Dendritic cell treated with granulocyte-macrophage colony-stimulating factor and Interleukin-4, amounts not matched to agents 40 ng/mL and 50 ng/mL, for 4 days (primary cell): ENCODE measurements at regions of chr5 and their contacts with region 1.

Region 1: GRCh38 chr5:89117124-89117644 is 234.2 kb upstream of the MEF2C start:
- H3K4me3 Mint-ChIP-seq: no peak overlapping the region
- H3K27ac Mint-ChIP-seq: no peak overlapping the region
- H3K4me1 Mint-ChIP-seq: no peaks in the 10 kb centered on the region
- H3K27me3 Mint-ChIP-seq: no peaks in the 10 kb centered on the region

Region 2: DNA sequence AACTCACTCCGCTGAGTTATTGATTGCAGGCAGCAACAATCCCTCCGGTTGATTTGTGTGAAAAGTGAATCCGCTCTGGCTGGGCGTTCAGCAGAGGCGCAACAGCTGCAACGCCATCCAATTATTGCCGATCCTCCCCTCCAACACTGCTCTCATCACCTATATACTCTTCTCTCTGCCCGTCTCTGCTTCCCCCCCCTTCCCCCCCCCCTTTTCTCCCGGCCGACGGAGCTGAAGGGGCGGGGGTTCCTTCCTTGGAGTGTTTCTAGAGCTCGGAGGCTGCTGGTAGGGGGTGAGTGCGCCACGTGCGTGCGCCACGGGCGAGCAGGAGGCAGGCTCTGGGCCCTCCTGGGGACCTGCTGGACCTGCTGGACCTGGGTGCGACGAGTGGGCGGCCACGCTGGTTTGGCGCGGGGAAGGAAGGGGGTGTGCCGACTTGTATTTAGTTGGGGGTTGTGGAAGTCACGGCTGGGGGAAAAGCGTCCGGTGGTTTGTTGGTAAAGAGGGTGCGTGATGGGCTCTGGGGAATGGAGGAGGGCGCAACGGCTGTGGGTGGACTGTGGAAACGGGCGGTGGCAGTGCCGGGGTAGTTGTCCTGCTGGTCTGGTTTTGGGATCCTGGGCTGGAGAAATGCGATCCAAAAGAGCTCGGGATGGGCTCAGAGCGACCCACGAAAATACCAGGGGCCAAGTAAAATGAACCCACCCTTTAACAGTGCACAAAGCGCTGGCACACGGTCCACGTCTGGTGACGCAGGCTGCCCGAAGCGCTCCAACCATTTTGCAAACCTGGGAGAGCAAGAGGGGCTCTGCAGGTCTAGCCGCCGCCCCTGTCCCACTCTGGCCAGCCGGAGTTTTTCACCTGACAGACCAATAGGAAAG is 227.8 kb before region 1 on chr5:
- intact Hi-C with region 1: loop called (anchors 5 kb)
- H3K4me3 Mint-ChIP-seq: peak overlapping the region; percentile 90
- H3K27ac Mint-ChIP-seq: peak overlapping the region; percentile 86
- H3K4me1 Mint-ChIP-seq: peaks cover 21% of the 10 kb centered on the region
- H3K27me3 Mint-ChIP-seq: peaks cover 6% of the 10 kb centered on the region

Region 3: DNA sequence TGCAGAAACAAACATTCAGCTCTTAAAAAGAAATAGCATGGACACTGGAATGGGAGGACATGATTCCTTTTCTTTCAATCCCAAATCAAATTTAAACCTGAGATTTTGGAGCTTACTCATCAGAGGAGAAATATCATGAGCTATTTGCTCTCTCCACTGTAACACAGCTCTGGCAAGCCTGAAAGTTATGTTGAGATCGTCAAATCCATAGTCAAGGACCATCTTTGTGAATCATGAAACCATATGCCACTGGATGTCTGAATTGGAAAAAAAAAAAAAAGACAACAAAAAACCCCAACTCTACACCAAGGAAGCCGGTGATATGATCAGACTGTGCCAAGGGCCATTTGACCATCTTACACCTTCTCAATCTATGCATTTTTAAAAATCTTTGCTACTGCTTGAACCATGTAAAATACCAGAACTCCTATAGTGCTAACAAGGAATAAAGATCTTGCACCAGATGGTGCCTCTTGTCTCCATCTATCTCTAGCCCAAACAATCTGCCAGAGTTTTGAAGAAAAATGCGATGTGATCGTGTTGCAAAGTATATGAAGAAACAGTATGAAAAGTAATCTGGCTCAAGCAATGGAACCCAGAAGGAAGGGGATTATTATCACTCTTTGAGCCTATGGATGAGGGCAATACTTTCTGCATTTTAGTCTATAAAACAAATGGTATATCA is 96.1 kb before region 1 on chr5:
- intact Hi-C with region 1: no loop called
- H3K4me3 Mint-ChIP-seq: no peak overlapping the region
- H3K27ac Mint-ChIP-seq: no peak overlapping the region
- H3K4me1 Mint-ChIP-seq: no peaks in the 10 kb centered on the region
- H3K27me3 Mint-ChIP-seq: no peaks in the 10 kb centered on the region

Region 4: DNA sequence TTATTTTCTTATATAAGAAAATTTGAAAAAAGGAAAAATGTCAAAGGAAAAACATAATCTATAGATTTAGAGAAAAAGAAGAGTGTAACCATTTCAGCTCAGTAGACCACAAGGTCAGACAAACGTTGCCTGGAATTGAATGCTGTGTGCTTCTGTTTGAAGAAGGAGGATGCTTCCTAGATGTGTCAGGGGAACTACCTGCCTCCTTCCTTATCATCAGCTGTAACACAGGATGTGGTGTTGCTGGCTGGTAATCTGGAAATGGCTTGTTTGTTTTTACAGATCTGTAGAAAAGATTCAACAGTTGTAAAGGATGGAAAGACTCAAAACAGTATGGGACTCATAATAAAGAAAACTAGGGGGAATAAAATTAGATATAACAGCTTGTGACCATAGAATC is 73.5 kb before region 1 on chr5:
- intact Hi-C with region 1: no loop called
- H3K4me3 Mint-ChIP-seq: no peak overlapping the region
- H3K27ac Mint-ChIP-seq: no peak overlapping the region
- H3K4me1 Mint-ChIP-seq: no peaks in the 10 kb centered on the region
- H3K27me3 Mint-ChIP-seq: no peaks in the 10 kb centered on the region

Region 5: GRCh38 chr5:89055695-89056085 is 61.5 kb before region 1 on chr5:
- intact Hi-C with region 1: no loop called
- H3K4me3 Mint-ChIP-seq: no peak overlapping the region
- H3K27ac Mint-ChIP-seq: no peak overlapping the region
- H3K4me1 Mint-ChIP-seq: no peaks in the 10 kb centered on the region
- H3K27me3 Mint-ChIP-seq: no peaks in the 10 kb centered on the region